Mammary epithelial cell (primary cell): ENCODE measurements at regions of chr14 and their contacts with region 1.

Region 1: GRCh38 chr14:90132821-90133570 is 71.2 kb downstream of the KCNK13 start:
- DNase-seq: no peak
- H3K4me3 ChIP-seq: no peak overlapping the region
- H3K27ac ChIP-seq: no peak overlapping the region
- H3K4me1 ChIP-seq: no peaks in the 10 kb centered on the region
- H3K27me3 ChIP-seq: no peaks in the 10 kb centered on the region
- CTCF ChIP-seq: no peak

Region 2: GRCh38 chr14:90109646-90110257 is 23.2 kb before region 1 on chr14:
- CTCF ChIA-PET with region 1: no interaction called
- dilution Hi-C with region 1: no loop called
- in situ Hi-C with region 1: no loop called
- intact Hi-C with region 1: no loop called
- DNase-seq: no peak
- H3K4me3 ChIP-seq: no peak overlapping the region
- H3K27ac ChIP-seq: no peak overlapping the region
- H3K4me1 ChIP-seq: peaks cover 5% of the 10 kb centered on the region
- H3K27me3 ChIP-seq: no peaks in the 10 kb centered on the region
- CTCF ChIP-seq: peak; percentile 39 to 43

Region 3: GRCh38 chr14:90177539-90178189 is 44.7 kb after region 1 on chr14:
- CTCF ChIA-PET with region 1: no interaction called
- dilution Hi-C with region 1: loop called (anchors 5 kb)
- in situ Hi-C with region 1: no loop called
- intact Hi-C with region 1: no loop called
- DNase-seq: no peak
- H3K4me3 ChIP-seq: no peak overlapping the region
- H3K27ac ChIP-seq: no peak overlapping the region
- H3K4me1 ChIP-seq: no peaks in the 10 kb centered on the region
- H3K27me3 ChIP-seq: no peaks in the 10 kb centered on the region
- CTCF ChIP-seq: no peak